Activated CD8-positive, alpha-beta T cell treated with anti-CD3 and anti-CD28 coated beads for 36 hours (primary cell): ENCODE measurements at regions of chr1 and their contacts with region 1.

Region 1: DNA sequence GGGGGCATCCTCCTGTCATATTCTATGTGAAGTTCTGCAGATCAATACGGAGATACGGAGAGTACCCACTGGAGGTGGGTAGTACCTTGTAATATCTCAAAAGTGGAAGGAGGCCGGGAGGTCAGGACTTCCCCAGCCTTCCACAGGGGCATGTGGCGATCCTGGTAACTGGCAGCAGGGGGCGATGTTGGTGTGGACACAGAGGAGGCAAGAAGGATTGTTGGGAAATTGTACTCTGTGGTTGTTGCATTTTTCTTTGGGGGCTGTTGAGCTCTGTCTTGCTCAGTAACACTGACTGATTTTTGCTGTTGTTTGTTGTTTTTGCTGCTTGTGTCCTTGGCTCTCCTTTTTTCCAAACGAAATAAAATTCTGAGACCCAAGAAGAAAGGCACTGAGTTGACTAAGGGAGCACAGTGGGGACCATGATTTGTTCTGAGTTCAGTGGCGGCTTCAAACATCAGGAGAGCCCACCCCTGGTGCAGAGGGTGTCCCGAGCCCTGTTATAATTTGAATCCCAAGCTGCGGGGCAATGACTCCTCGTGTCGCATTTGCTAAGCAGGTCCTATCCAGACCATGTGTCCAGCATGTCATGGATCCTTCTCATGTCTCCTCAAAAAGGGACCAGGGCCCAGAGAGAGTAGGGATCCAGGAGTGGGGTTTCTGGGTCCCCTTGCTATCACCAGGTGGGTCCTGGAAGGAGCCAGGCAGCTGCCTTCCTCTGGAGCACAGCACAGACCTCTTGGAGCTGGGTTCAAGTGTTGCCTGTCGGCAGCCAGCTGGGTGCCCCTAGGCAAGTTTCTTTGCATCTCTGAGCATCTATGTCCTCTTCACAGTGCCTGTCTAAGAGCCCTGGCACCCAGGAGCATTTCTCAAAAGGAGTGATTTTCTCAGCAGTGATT is 22.8 kb downstream of the LHX4 start:
- DNase-seq: peak; percentile 86
- ATAC-seq: peak; percentile 87
- H3K4me3 Mint-ChIP-seq: no peak overlapping the region
- H3K27ac Mint-ChIP-seq: no peak overlapping the region
- H3K4me1 Mint-ChIP-seq: no peaks in the 10 kb centered on the region
- H3K27me3 Mint-ChIP-seq: peaks cover 28% of the 10 kb centered on the region
- CTCF ChIP-seq: peak; percentile 77

Region 2: GRCh38 chr1:179966551-179966950 is 286.3 kb before region 1 on chr1:
- CTCF ChIA-PET with region 1: no interaction called
- POLR2A ChIA-PET with region 1: no interaction called
- intact Hi-C with region 1: no loop called
- DNase-seq: no peak
- ATAC-seq: no peak
- H3K4me3 Mint-ChIP-seq: no peak overlapping the region
- H3K27ac Mint-ChIP-seq: no peak overlapping the region
- H3K4me1 Mint-ChIP-seq: peaks cover 61% of the 10 kb centered on the region
- H3K27me3 Mint-ChIP-seq: no peaks in the 10 kb centered on the region
- CTCF ChIP-seq: no peak

Region 3: DNA sequence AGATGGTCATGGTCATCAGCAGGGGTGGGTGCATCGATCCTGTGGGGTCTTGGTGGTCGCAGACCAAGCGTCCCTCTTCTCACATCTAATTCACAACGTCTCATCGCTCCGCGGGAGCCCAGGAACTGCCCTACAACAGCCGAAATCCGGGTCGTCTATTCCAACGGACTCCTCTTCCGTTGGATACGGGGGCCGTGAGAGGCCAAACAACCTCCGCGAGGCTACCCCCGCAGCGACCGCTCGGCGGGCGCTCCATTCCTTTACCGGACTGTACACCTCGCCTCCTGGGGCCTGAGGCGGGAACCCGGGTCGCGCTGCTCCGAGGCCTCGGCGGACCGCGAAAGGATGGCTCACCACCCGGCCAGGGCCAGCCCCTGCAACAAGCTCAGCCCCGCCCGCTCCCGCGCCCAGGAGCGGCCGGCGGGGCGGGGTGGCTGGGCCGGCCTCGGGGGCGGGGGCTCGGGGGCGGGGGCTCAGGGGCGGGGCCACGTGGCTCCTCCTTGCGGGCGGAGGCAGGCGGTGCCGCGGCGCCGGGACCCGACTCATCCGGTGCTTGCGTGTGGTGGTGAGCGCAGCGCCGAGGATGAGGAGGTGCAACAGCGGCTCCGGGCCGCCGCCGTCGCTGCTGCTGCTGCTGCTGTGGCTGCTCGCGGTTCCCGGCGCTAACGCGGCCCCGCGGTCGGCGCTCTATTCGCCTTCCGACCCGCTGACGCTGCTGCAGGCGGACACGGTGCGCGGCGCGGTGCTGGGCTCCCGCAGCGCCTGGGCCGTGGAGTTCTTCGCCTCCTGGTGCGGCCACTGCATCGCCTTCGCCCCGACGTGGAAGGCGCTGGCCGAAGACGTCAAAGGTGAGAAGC is 98.3 kb before region 1 on chr1 and contains the start of gene QSOX1:
- CTCF ChIA-PET with region 1: no interaction called
- POLR2A ChIA-PET with region 1: no interaction called
- intact Hi-C with region 1: no loop called
- DNase-seq: peak; percentile 90
- ATAC-seq: peak; percentile 97
- H3K4me3 Mint-ChIP-seq: peak within 1 kb of the TSS; percentile 90
- H3K27ac Mint-ChIP-seq: peak within 1 kb of the TSS; percentile 85
- H3K4me1 Mint-ChIP-seq: peaks cover 29% of the 10 kb centered on the region
- H3K27me3 Mint-ChIP-seq: no peaks in the 10 kb centered on the region
- CTCF ChIP-seq: no peak
- total RNA-seq, gene QSOX1: 32.2 to 33.9 TPM

Region 4: GRCh38 chr1:180415985-180416633 is 163.2 kb after region 1 on chr1:
- CTCF ChIA-PET with region 1: interaction called, 13 read pairs
- POLR2A ChIA-PET with region 1: interaction called, 4 read pairs
- intact Hi-C with region 1: loop called (anchors 10 kb)
- DNase-seq: no peak
- ATAC-seq: no peak
- H3K4me3 Mint-ChIP-seq: no peak overlapping the region
- H3K27ac Mint-ChIP-seq: no peak overlapping the region
- H3K4me1 Mint-ChIP-seq: no peaks in the 10 kb centered on the region
- H3K27me3 Mint-ChIP-seq: no peaks in the 10 kb centered on the region
- CTCF ChIP-seq: peak; percentile 74

Region 5: DNA sequence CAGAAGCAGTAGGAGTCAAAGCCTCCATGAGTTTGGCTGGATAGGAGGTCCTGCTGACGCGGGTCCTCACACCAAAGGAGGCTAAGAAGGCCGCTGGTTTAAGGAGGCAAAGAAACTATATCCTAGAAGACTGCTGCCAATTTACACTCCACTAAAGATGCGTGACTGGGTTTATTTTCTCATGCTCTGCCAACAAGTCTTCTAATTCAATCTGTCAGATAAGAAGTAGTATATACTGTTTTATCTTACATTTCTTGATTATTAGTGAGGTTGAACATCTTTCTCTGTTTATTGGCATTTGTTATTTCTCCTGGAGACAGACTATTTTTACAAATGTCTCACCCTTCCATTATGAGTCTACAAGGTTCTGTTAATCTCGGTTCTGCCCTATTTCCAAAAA is 215.4 kb after region 1 on chr1:
- CTCF ChIA-PET with region 1: interaction called, 19 read pairs
- POLR2A ChIA-PET with region 1: no interaction called
- intact Hi-C with region 1: no loop called
- DNase-seq: no peak
- ATAC-seq: no peak
- H3K4me3 Mint-ChIP-seq: no peak overlapping the region
- H3K27ac Mint-ChIP-seq: no peak overlapping the region
- H3K4me1 Mint-ChIP-seq: peaks cover 9% of the 10 kb centered on the region
- H3K27me3 Mint-ChIP-seq: no peaks in the 10 kb centered on the region
- CTCF ChIP-seq: no peak

Region 6: GRCh38 chr1:180482425-180483275 is 229.8 kb after region 1 on chr1:
- CTCF ChIA-PET with region 1: interaction called, 39 read pairs
- POLR2A ChIA-PET with region 1: no interaction called
- intact Hi-C with region 1: loop called (anchors 2 kb)
- DNase-seq: peak; percentile 17
- ATAC-seq: no peak
- H3K4me3 Mint-ChIP-seq: no peak overlapping the region
- H3K27ac Mint-ChIP-seq: no peak overlapping the region
- H3K4me1 Mint-ChIP-seq: peaks cover 16% of the 10 kb centered on the region
- H3K27me3 Mint-ChIP-seq: no peaks in the 10 kb centered on the region
- CTCF ChIP-seq: peak; percentile 80